ENCODE measurements at regions of chr18 and their contacts with region 1.

Region 1: GRCh38 chr18:46574000-46574742 is 82.8 kb downstream of the LOXHD1 start:
- DNase-seq: no peak
- ATAC-seq: no peak

Region 2: DNA sequence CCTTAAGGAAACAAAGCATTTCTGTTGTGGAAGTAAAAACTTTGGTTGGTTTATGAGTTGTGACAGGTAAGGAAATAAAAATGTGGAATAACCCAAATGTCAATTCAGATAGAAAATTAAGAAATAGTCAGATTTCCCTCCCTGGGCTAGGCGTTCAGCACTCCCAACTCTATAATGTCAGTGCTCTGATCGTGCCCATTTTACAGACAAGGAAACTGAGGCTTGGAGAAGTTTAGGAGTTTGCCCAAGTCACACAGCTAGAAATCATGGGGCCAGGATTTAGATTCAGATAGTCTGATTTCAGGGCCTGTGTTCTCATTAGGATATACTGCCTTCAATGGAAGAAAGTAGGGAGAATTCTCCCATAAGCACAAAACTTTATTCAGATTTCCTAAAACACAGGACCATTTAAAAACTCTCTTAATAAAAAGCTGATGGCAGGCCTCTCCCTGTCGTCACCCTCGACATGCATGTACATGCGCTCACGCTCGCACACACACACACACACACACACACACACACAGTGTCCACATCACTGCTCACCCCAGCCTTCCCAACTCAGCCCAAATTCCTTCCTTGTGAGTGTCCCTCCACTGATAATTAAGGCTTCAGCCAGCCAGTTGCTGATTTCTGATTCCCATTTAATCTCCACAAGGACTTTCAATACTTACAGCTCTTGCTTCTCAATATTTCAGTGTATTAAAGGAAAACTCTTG is 1008.0 kb before region 1 on chr18:
- intact Hi-C with region 1: loop called (anchors 10 kb)
- DNase-seq: no peak
- ATAC-seq: peak; percentile 44

Measured in sciatic nerve (tissue), 2 donors.